ENCODE measurements at regions of chr11 and their contacts with region 1.

Region 1: GRCh38 chr11:74170694-74171629 is at the starts of genes C2CD3 and PPME1:
- DNase-seq: peak; percentile 97 to 99
- ATAC-seq: peak; percentile 97 to 98
- H3K4me3 ChIP-seq: peak within 1 kb of the TSS; percentile 86
- H3K27ac ChIP-seq: peak within 1 kb of the TSS; percentile 90
- H3K4me1 ChIP-seq: peaks cover 46% of the 10 kb centered on the region
- CTCF ChIP-seq: peak; percentile 41; the same call in 1 of the 3 replicates
- EP300 ChIP-seq: no peak
- POLR2A ChIP-seq: peak; percentile 98
- RAD21 ChIP-seq: peak; percentile 44 to 71
- polyA plus RNA-seq, gene C2CD3: 15.2 and 22.7 TPM in 2 replicates
- polyA plus RNA-seq, gene PPME1: 69.2 and 82.6 TPM in 2 replicates

Region 2: DNA sequence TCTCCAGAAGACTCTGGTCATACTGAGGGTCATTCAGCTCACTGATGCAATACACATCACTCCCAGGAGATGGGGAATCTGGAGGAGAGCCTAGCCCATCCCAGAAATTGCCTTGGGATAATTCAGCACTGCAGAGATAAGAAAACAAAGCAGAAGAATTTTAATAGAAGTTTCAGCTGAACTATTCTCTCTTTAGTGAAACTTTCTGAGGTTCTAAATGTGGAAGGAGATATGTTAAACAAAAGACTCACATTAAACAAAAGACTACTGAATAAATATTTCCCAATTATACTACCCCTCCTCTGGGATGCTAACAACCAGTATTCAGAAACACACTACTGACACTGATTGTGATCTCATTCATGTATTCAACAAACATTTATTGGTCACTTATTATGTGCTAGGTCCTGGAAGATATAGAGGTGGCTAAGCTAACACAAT is 47.9 kb before region 1 on chr11:
- CTCF ChIA-PET with region 1: interaction called, 11 read pairs
- POLR2A ChIA-PET with region 1: interaction called, 5 read pairs
- DNase-seq: peak; percentile 29 to 79
- ATAC-seq: peak; percentile 93 to 98
- H3K4me3 ChIP-seq: no peak overlapping the region
- H3K27ac ChIP-seq: peak overlapping the region; percentile 61 to 83
- H3K4me1 ChIP-seq: peaks cover 32% of the 10 kb centered on the region
- CTCF ChIP-seq: no peak
- EP300 ChIP-seq: peak in 1 of 2 experiments; percentile 21; a peak in 1 of 5 replicates
- POLR2A ChIP-seq: no peak
- RAD21 ChIP-seq: peak; percentile 19 to 35; a peak in 3 of 5 replicates

Region 3: DNA sequence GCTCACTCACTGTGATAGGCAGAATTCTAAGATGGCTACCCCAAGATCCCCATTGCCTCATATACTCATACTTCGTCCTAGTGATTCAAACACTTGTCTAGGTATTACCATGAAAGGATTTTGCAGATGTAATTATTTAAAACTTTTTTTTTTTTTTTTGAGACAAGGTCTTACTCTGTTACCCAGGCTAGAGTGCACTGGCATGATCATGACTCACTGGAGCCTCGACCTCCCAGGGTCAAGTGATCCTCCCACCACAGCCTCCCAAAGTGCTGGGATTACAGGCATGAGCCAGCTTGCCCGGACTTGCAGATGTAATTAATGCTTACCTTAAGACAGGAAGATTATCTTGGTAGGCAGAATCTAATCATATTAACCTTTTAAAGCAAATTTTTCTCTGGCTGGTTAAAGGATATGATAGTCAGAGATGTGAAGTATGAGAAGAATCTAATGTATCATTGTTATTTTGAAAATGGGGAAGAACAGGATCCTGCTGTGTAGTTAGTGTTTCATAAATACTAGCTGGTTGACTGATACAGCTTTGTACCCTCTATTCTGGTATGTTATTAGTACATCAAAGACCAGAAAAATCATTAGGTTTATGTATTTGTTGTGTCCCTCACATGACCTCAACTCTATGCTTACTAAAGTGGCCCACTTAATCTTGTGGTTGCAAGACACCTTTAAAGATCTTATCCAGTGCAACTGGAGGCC is 35.7 kb before region 1 on chr11:
- CTCF ChIA-PET with region 1: interaction called, 10 read pairs
- POLR2A ChIA-PET with region 1: interaction called, 3 read pairs
- DNase-seq: peak in 1 of 2 experiments; percentile 77
- ATAC-seq: peak in 1 of 2 experiments; percentile 5; a peak in 1 of 6 replicates
- H3K4me3 ChIP-seq: no peak overlapping the region
- H3K27ac ChIP-seq: peak overlapping the region; percentile 88 to 90
- H3K4me1 ChIP-seq: peaks cover 70% of the 10 kb centered on the region
- CTCF ChIP-seq: no peak
- EP300 ChIP-seq: peak in 1 of 2 experiments; percentile 39; a peak in 1 of 5 replicates
- POLR2A ChIP-seq: no peak
- RAD21 ChIP-seq: no peak

Measured in A549 (cell line).